HEK293 (cell line): ENCODE measurements at regions of chr19 and their contacts with region 1.

Region 1: DNA sequence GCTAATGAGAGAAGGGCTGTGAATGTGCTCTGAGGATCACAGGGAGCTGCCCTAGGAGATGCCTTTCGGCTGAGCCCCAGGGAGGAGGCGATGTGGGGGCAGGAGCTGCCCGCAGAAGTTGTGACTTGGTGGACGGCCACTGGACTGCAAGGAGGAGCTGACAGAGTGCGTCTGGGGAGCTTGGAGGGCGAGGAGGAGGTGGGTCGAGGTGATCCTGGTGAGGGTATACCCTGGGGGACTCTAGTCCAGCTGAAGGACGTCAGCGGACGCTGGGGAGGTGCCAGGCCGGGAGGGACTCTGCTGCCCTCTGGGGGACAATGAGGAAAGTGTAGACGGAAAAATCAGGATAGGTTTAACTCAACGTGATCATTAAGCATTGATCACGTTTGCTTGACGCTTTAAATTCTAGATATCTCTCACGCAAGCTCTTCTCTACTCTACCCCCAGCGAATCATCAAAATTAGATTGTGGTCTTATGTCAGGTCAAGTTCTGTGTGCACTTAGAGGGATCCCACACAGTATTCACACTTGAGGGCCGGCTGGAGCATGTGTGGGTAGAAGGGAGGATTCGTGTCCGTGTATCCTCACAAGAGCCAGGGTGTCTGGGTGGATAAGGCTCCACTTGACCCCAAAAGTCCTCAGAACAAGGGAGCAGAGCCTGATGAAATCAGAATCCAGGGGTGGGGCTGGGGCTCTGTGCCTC is 3.3 kb upstream of the CEACAM7 start:
- H3K4me3 ChIP-seq: no peak overlapping the region
- H3K27ac ChIP-seq: no peak overlapping the region
- H3K4me1 ChIP-seq: no peaks in the 10 kb centered on the region
- CTCF ChIP-seq: peak; percentile 79

Region 2: DNA sequence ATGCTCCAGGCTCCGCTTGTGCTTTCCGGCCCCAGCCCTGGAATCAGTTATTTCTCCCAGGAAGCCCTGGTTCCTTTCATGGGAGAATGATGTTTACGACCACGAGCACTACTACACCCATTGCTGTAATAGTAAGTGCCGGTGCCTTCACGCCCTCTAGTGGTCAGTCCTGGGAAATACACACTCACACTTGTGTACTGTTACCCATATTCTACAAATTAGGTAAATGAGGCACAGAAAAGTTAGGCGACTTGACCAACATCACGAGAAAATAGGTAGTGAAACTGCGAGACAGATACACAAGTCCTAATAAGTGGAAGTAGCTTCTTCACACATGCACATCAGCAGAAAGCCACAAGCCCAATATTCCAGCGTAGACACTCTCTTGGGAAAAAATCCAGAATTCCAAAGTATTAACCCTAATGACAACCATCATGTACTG is 93.8 kb before region 1 on chr19:
- CTCF ChIA-PET with region 1: interaction called, 17 read pairs
- POLR2A ChIA-PET with region 1: no interaction called
- H3K4me3 ChIP-seq: no peak overlapping the region
- H3K27ac ChIP-seq: no peak overlapping the region
- H3K4me1 ChIP-seq: peaks cover 10% of the 10 kb centered on the region
- CTCF ChIP-seq: peak; percentile 84

Region 3: GRCh38 chr19:41649834-41650233 is 41.6 kb before region 1 on chr19:
- CTCF ChIA-PET with region 1: interaction called, 14 read pairs
- POLR2A ChIA-PET with region 1: no interaction called
- H3K4me3 ChIP-seq: no peak overlapping the region
- H3K27ac ChIP-seq: no peak overlapping the region
- H3K4me1 ChIP-seq: no peaks in the 10 kb centered on the region
- CTCF ChIP-seq: no peak

Region 4: GRCh38 chr19:41701401-41702075 is 10.1 kb after region 1 on chr19:
- CTCF ChIA-PET with region 1: interaction called, 57 read pairs
- POLR2A ChIA-PET with region 1: no interaction called
- H3K4me3 ChIP-seq: no peak overlapping the region
- H3K27ac ChIP-seq: no peak overlapping the region
- H3K4me1 ChIP-seq: peaks cover 3% of the 10 kb centered on the region; the same call in 1 of the 2 replicates
- CTCF ChIP-seq: peak; percentile 62

Region 5: GRCh38 chr19:41734617-41735016 is 43.2 kb after region 1 on chr19:
- CTCF ChIA-PET with region 1: interaction called, 11 read pairs
- POLR2A ChIA-PET with region 1: no interaction called
- H3K4me3 ChIP-seq: no peak overlapping the region
- H3K27ac ChIP-seq: no peak overlapping the region
- H3K4me1 ChIP-seq: no peaks in the 10 kb centered on the region
- CTCF ChIP-seq: no peak